Activated naive CD4-positive, alpha-beta T cell treated with anti-CD3 and anti-CD28 coated beads for 36 hours (primary cell): ENCODE measurements at regions of chr11 and their contacts with region 1.

Region 1: DNA sequence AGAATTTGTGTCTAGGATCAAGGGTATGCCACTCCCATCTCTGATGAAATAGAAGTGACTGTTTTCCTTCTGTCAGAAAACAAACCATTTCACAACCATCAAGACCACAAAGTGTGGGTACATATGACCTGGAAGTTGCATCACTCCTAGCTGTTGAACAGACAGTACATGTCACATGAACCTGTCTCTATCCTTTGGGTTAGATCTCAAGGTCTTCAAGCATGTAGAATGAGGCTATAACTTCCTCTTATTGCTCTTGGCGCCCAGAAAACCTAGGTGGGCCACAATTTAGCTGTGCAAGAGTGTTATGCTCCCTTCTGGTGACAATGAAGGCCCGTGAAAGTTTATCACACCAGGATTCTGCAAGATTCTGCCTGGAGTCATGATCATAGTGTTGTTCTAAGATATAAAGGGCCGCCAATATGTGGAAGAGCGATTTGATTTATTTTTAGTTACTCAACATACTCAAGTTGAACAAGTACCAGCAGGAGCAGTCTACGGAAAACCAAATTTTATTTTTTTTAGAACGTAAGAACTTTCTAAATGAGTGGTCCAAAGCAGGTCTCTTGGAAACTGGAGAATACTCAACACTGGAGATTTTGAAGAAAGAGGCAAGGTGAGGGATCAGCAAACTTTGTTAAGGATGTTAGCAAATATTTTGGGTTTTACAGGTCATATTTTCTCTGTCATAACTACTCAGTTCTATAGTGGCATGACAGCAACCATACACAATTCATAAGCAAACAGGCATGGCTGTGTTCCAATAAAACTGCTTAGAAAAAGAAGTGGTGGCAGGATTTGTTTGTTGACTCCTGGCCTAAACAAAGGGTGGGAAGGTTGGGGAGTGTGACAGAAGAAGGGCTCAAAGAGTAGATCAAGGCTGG is 101.8 kb downstream of the USP35 start:
- DNase-seq: peak; percentile 45
- H3K4me3 Mint-ChIP-seq: no peak overlapping the region
- H3K27ac Mint-ChIP-seq: peak overlapping the region; percentile 63
- H3K4me1 Mint-ChIP-seq: peaks cover 27% of the 10 kb centered on the region
- H3K27me3 Mint-ChIP-seq: no peaks in the 10 kb centered on the region

Region 2: DNA sequence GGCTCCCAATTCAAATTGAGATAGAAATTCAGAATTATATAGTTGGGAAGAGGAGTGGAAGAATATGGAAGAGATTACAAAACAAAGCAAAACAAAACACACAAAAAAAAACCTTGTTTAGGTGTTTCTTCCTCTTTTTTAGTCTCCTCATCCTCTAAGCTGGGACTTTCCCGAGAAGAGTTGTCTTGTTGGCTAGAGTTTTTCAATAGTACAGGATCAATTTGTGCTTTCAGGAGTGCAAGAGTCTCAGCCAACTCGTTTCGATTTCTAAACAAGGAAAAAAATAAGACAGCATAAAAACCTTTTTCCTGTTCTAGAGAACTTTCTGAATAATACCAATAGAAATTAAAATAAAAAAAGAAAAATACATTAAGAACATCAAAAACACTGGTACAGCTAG is 565.1 kb before region 1 on chr11:
- CTCF ChIA-PET with region 1: no interaction called
- intact Hi-C with region 1: no loop called
- DNase-seq: no peak
- H3K4me3 Mint-ChIP-seq: no peak overlapping the region
- H3K27ac Mint-ChIP-seq: no peak overlapping the region
- H3K4me1 Mint-ChIP-seq: peaks cover 10% of the 10 kb centered on the region
- H3K27me3 Mint-ChIP-seq: no peaks in the 10 kb centered on the region

Region 3: DNA sequence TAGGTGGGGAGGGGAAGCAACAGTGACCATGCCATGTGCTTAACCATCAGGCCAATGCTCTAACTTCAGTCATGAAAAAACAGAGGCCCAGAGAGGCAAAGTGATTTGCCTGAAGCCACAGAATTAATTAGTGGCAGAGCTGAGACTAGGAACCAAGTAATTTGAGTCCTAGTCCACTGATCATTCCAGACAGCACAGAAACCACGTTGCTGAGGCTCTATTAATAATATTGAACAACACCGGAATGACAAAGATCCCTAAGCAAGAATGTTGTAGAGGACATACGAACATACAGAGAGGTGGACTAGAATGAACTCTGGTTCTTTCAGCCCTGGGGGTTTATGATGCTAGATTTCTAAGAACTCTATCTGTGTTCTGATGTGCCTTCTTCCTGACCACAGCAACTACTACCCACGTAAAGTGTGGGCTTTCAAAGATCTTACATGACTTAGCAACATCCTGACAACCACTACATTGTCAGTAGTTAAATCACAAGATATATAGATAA is 34.8 kb after region 1 on chr11:
- CTCF ChIA-PET with region 1: no interaction called
- intact Hi-C with region 1: loop called (anchors 5 kb)
- DNase-seq: no peak
- H3K4me3 Mint-ChIP-seq: no peak overlapping the region
- H3K27ac Mint-ChIP-seq: no peak overlapping the region
- H3K4me1 Mint-ChIP-seq: peaks cover 13% of the 10 kb centered on the region
- H3K27me3 Mint-ChIP-seq: no peaks in the 10 kb centered on the region